CD14-positive monocyte (primary cell): ENCODE measurements at regions of chr9 and their contacts with region 1.

Region 1: GRCh38 chr9:137034863-137035761 is 3.2 kb upstream of the FUT7 start:
- DNase-seq: peak; percentile 78 to 84 (median 84)
- H3K4me3 ChIP-seq: peak overlapping the region; percentile 0 to 74 (median 29)
- H3K4me3 Mint-ChIP-seq: peak overlapping the region; percentile 78 to 89
- H3K27ac ChIP-seq: peak overlapping the region; percentile 71 to 83
- H3K27ac Mint-ChIP-seq: peak overlapping the region; percentile 86 to 92 (median 90)
- H3K4me1 ChIP-seq: peaks cover 45 to 57% of the 10 kb centered on the region in 2 donors
- H3K4me1 Mint-ChIP-seq: peaks cover 37% of the 10 kb centered on the region
- H3K27me3 ChIP-seq: no peaks in the 10 kb centered on the region
- H3K27me3 Mint-ChIP-seq: no peaks in the 10 kb centered on the region
- CTCF ChIP-seq: peak; percentile 90

Region 2: DNA sequence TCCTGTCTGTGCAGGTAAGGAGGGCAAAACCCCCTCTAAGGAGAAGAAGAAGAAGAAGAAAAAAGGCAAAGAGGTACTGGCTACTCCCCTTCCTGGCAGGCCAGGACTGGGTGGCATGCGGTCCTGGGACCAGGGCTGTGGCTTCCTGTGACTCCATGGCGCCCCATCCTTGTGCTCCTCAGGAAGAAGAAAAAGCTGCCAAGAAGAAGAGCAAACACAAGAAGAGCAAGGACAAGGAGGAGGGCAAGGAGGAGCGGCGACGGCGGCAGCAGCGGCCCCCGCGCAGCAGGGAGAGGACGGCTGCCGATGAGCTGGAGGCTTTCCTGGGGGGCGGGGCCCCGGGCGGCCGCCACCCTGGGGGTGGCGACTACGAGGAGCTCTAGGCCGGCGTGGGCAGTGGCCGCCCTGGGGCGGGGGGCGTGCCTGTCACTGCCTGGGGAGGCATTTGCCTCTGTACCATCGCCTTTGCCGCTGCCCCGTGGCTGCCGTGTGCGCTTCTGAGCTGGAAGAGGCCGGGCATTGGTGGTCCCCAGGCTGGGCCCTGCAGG is 194.9 kb before region 1 on chr9:
- intact Hi-C with region 1: loop called in 1 of 2 experiments (anchors 5 kb)
- DNase-seq: no peak
- H3K4me3 ChIP-seq: no peak overlapping the region
- H3K4me3 Mint-ChIP-seq: no peak overlapping the region
- H3K27ac ChIP-seq: no peak overlapping the region
- H3K27ac Mint-ChIP-seq: peak overlapping the region in 4 of 7 donors; percentile 54 to 85 (median 78)
- H3K4me1 ChIP-seq: peaks cover 15 to 25% of the 10 kb centered on the region in 2 donors
- H3K4me1 Mint-ChIP-seq: peaks cover 8% of the 10 kb centered on the region
- H3K27me3 ChIP-seq: peaks cover 2 to 24% of the 10 kb centered on the region in 2 donors
- H3K27me3 Mint-ChIP-seq: peaks cover 10 to 30% (median 21%) of the 10 kb centered on the region in 3 donors
- CTCF ChIP-seq: no peak

Region 3: DNA sequence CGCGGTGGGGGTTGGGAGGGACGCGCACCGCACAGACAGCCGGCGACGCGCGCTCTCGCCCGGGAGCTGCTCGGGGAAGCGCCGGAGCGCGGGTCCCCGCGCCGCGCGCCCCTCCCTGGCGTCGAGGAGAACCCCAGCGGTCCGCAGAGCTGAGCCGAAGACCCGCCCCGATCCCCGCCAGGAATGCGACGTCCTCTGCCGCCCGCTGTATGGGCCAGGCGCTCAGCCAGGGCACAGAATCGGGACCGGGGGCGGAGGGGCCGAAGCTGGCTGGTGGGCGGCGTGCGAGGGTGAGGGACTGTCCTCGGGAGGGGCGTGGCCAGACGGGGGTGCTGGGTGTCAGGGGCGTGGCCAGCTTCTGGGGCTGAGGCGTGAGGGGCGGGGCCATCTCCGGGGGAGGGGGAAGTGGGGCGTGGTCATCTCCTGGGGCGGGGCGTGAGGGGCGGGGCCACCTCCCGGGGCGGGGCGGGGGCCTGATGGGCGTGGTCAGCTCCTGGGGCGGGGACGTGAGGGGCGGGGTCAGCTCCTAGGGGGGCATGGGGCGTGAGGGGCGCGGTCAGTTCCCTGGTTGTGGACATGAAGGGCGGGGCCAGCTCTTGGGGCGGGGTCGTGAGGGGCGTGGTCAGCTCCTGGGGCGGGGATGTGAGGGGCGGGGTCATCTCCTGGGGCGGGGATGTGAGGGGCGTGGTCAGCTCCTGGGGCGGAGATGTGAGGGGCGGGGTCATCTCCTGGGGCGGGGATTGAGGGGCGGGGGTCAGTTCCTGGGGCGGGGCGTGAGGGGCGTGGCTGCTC is 56.8 kb before region 1 on chr9:
- intact Hi-C with region 1: no loop called
- DNase-seq: peak; percentile 15 to 58 (median 36)
- H3K4me3 ChIP-seq: peak overlapping the region in 1 of 3 experiments; percentile 67
- H3K4me3 Mint-ChIP-seq: peak overlapping the region in 1 of 2 donors; percentile 70
- H3K27ac ChIP-seq: no peak overlapping the region
- H3K27ac Mint-ChIP-seq: no peak overlapping the region
- H3K4me1 ChIP-seq: peaks cover 22 to 35% of the 10 kb centered on the region in 2 donors
- H3K4me1 Mint-ChIP-seq: peaks cover 19% of the 10 kb centered on the region
- H3K27me3 ChIP-seq: peaks cover 0 to 22% of the 10 kb centered on the region in 2 donors
- H3K27me3 Mint-ChIP-seq: peaks cover 20 to 59% (median 28%) of the 10 kb centered on the region in 3 donors
- CTCF ChIP-seq: no peak

Region 4: DNA sequence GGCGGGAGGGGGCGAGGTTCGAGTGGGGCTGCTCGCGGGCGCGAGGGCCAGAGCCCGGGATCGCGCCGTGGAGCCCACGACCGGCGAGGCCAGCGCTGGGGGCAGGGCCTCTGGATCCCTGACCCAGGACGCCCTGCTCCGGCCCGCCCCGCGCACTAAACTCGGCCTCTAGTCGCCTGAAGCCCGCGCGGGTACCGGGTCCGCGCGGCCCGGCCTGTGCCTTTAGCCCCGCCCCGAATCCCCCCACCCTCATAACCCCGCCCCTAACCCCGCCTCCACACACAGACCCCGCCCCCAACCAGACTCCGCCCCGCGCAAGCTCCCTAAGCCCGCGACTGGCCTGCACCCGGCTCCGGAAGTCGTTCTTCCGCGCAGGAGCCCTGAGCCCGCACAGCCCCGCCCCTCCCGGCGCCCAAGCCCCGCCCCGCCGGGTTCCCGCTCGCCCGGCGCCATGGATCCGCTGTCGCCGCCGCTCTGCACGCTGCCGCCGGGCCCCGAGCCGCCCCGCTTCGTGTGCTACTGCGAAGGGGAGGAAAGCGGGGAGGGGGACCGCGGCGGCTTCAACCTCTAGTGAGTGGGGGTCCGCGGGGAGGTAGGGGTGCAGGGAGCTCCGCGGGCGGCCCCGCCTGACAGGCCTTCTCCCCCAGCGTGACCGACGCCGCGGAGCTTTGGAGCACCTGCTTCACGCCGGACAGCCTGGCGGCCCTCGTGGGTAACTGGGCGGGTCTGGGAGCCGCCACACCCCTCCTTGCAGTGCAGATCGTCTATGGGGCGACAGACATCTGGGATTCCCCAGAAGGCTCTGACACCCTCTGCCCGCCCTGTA is 42.9 kb before region 1 on chr9 and contains the start of gene PAXX:
- intact Hi-C with region 1: loop called (anchors 5 kb)
- DNase-seq: peak; percentile 84 to 88 (median 84)
- H3K4me3 ChIP-seq: peak within 1 kb of the TSS; percentile 67 to 88 (median 85)
- H3K4me3 Mint-ChIP-seq: peak within 1 kb of the TSS; percentile 81 to 89
- H3K27ac ChIP-seq: peak within 1 kb of the TSS; percentile 64 to 79
- H3K27ac Mint-ChIP-seq: peak within 1 kb of the TSS; percentile 79 to 93 (median 89)
- H3K4me1 ChIP-seq: peaks cover 40 to 57% of the 10 kb centered on the region in 2 donors
- H3K4me1 Mint-ChIP-seq: peaks cover 40% of the 10 kb centered on the region
- H3K27me3 ChIP-seq: peaks cover 0 to 38% of the 10 kb centered on the region in 2 donors
- H3K27me3 Mint-ChIP-seq: peaks cover 29 to 55% (median 53%) of the 10 kb centered on the region in 3 donors
- CTCF ChIP-seq: no peak
- polyA plus RNA-seq, gene PAXX: 35.3 to 92.9 (median 40.7) TPM

Region 5: DNA sequence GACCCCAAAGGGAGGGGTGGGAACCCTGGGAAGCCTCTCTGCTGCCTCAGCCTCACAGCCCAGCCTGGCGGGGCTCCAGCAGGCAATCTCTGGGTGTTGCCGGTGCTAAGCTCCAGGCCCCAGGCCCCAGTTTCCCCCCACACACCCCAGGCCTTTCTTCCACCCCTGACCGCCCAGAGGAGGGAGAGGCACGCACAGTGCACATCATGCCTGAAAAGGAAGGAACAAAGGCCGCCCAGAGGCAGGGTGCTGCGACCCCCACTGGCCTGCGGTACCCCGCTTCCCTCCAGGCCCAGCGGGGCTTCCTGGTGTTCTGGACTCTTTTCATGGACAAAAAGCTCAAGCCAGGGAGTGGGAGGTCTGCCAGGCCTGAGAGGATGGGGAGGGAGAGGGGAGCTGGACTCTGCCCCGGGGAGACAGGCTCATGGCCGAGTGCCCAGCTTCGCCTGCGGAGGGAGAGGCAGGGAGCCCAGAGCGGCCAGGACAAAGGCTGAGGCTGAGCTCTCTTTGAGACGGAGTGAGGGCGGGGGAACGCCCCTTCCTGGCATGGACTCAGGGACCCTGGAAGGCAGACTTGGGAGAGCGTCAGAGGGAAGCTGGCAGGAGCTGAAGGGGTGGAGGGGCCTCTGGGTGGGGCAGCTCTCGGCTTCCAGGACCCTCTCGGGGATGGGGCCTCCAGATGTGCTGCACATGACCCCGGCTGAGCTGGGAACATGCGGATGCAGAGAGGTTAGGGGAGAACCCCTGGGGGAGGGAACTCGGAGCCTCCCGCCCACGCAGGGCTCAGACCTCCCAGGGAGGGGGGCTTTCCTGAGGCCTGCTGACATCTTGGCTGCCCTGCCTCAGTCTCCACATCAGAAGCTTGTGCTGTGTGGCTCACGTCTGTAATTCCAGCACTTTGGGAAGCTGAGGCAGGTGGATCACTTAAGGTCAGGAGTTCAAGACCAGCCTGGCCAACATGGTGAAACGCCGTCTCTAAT is 20.6 kb after region 1 on chr9:
- intact Hi-C with region 1: no loop called
- DNase-seq: no peak
- H3K4me3 ChIP-seq: no peak overlapping the region
- H3K4me3 Mint-ChIP-seq: no peak overlapping the region
- H3K27ac ChIP-seq: no peak overlapping the region
- H3K27ac Mint-ChIP-seq: no peak overlapping the region
- H3K4me1 ChIP-seq: peaks cover 0 to 10% of the 10 kb centered on the region in 2 donors
- H3K4me1 Mint-ChIP-seq: peaks cover 14% of the 10 kb centered on the region
- H3K27me3 ChIP-seq: peaks cover 13 to 43% of the 10 kb centered on the region in 2 donors
- H3K27me3 Mint-ChIP-seq: peaks cover 45 to 67% (median 47%) of the 10 kb centered on the region in 3 donors
- CTCF ChIP-seq: no peak

Region 6: GRCh38 chr9:137070201-137070905 is 35.2 kb after region 1 on chr9 and contains the start of gene SAPCD2:
- intact Hi-C with region 1: loop called in 1 of 2 experiments (anchors 5 kb)
- DNase-seq: peak; percentile 90 to 94 (median 91)
- H3K4me3 ChIP-seq: peak within 1 kb of the TSS; percentile 2 to 71 (median 39)
- H3K4me3 Mint-ChIP-seq: peak within 1 kb of the TSS; percentile 75 to 91
- H3K27ac ChIP-seq: peak within 1 kb of the TSS; percentile 53 to 56
- H3K27ac Mint-ChIP-seq: peak within 1 kb of the TSS; percentile 77 to 96 (median 89)
- H3K4me1 ChIP-seq: peaks cover 41 to 71% of the 10 kb centered on the region in 2 donors
- H3K4me1 Mint-ChIP-seq: peaks cover 61% of the 10 kb centered on the region
- H3K27me3 ChIP-seq: peaks cover 0 to 5% of the 10 kb centered on the region in 2 donors
- H3K27me3 Mint-ChIP-seq: peaks cover 0 to 3% (median 1%) of the 10 kb centered on the region in 3 donors
- CTCF ChIP-seq: no peak
- polyA plus RNA-seq, gene SAPCD2: 0.03 to 3.1 (median 1.7) TPM